ENCODE measurements at regions of chr17 and their contacts with region 1.

Region 1: DNA sequence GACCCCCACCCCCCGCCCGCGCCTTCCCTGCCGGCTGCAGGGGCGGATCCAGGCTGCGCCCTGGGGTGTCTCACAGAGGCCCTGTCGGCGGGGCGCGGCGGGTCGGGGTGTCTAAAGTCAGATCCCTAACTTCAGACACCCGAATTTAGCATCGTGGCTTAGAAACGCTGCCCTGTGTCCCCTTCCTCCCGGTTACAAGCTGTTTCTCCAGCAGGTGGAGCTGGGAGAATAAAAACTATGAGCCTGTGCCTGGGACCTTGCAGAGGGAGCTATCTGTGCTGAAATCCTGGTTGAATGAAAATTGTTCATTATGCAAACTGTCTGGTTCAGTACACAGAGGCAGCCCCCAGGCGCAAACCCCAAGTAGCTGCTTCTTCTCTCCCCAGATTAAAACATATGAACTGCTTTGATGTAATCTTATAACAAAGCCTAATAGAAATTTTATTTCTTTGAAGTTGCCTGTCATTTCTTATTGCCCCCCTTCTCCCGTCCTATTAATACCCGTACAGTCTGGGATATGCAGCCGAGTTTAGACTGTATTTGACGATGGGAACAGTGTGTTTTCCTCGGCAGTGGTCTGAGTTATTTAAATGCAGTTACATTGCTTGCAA is 79.0 kb downstream of the RPA1 start:
- DNase-seq: peak; percentile 69
- CTCF ChIP-seq: peak; percentile 57

Region 2: GRCh38 chr17:1919201-1919600 is 10.4 kb after region 1 on chr17:
- CTCF ChIA-PET with region 1: interaction called, 10 read pairs
- POLR2A ChIA-PET with region 1: no interaction called
- DNase-seq: no peak
- CTCF ChIP-seq: no peak

Region 3: DNA sequence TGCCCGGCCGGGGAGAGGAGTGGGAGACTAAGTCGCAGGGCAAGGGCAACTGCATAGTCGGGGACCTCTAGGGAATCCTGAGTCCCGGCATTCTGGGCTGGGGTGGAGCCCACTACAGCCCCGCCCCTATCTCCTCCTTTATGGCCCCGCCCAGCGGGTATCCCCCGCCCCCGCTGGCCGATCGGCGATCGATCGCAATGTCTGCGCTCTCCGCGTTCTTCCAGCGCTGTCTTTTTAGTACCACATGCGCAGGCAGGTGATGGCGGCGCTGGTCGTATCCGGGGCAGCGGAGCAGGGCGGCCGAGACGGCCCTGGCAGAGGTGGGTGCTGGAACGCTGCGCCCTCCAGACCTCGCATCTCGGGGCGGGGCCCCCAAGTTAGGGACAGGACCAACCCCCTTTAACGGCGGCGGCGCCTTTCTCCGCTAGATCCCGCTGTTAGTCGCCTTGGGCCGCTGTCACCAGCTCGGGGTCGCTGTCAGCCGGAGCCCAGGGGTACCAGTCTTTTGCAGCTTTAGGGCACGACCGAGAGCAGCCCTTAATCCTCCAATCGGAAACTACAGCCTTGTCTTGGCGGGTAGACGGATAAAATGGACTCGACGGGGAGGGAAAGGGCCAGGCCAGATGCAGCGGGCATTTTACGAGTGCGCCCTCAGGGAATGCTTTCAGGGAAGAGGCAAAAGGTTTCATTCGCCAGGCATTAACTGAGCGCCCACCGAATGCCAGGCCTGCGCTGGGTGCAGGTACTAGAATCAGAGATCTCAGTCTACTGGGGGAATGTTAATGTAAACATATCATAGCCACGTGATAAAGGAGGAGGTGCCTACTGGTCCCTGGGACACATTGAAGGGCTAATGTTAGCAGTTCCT is 121.3 kb after region 1 on chr17 and contains the start of gene DPH1:
- CTCF ChIA-PET with region 1: interaction called, 10 read pairs
- POLR2A ChIA-PET with region 1: no interaction called
- DNase-seq: peak; percentile 92
- CTCF ChIP-seq: no peak

Region 4: DNA sequence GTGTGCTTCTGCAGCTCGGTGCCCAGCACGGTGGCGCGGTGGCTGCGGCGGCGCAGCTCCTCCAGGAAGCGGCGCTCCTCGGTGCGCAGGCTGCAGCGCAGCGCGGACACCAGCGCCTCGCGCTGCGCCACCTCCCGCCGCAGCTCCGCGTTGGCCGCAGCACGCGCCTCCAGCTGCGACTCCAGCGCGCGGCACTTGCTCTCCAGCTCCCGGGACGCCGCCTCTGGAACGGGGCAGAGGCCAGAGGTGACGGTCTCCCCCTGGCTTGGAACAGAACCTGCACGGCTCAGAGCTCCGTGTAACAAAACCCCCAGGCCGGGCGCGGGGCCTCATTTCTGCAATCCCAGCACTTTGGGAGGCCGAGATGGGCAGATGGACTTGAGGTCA is 816.0 kb after region 1 on chr17:
- CTCF ChIA-PET with region 1: no interaction called
- POLR2A ChIA-PET with region 1: interaction called, 20 read pairs
- DNase-seq: no peak
- CTCF ChIP-seq: peak; percentile 7